Thyroid gland (tissue), 4 donors: ENCODE measurements at regions of chr15 and their contacts with region 1.

Region 1: DNA sequence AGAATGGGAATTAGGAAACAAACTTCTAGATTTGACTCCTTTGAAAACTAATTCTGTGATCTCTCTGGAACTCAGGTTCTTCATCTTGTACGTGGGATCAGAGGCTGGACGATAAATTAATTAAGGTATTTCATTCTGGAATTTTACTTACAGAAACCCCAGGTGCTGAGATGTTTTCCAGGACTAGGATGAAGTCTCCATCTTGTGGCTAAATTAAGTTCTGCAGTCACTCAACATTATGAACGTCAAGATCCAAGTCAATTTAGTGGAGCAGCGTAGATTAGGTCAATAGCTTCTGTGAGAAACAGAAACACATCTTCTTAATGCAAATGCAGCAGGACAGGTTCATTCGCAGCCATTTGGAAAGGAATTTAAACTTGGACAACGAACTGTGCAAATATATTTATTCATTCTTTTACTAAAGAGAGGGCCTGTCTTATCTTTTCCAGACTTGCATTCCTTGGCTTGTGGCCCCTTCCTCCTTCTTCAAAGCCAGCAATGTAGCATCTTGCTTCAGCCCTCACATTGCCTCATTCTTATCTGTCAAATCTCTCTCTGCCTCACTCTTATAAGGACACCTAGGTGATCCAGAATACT is 26.7 kb upstream of the TMC3 start:
- DNase-seq: no peak
- H3K4me3 ChIP-seq: no peak overlapping the region
- H3K27ac ChIP-seq: no peak overlapping the region
- H3K4me1 ChIP-seq: no peaks in the 10 kb centered on the region
- H3K27me3 ChIP-seq: no peaks in the 10 kb centered on the region
- CTCF ChIP-seq: peak; percentile 55 to 90 (median 82)
- POLR2A ChIP-seq: no peak

Region 2: DNA sequence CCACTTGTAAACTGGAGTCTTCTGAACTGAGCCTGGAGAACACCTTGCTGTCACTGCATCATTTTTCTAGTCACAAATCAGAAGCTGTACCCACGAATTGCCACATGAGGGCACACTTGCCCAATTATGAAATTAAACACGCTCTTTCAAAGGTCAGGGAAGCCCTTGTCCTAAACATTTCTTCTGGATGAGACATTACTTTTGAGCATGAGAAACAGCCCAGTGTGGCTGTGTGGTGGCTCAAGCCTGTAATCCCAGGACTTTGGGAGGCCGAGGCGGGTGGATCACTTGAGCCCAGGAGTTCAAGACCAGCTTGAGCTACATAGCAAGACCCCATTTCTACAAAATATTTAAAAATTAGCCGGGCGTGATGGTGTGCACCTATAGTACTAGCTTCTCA is 294.2 kb before region 1 on chr15:
- intact Hi-C with region 1: loop called (anchors 10 kb)
- DNase-seq: peak; percentile 49 to 58
- H3K4me3 ChIP-seq: no peak overlapping the region
- H3K27ac ChIP-seq: no peak overlapping the region
- H3K4me1 ChIP-seq: no peaks in the 10 kb centered on the region
- H3K27me3 ChIP-seq: no peaks in the 10 kb centered on the region
- CTCF ChIP-seq: peak; percentile 40 to 87 (median 78)
- POLR2A ChIP-seq: no peak

Region 3: GRCh38 chr15:81271761-81272644 is 128.7 kb before region 1 on chr15:
- intact Hi-C with region 1: loop called (anchors 2 kb)
- DNase-seq: no peak
- H3K4me3 ChIP-seq: no peak overlapping the region
- H3K27ac ChIP-seq: no peak overlapping the region
- H3K4me1 ChIP-seq: peaks cover 0 to 10% of the 10 kb centered on the region in 2 donors
- H3K27me3 ChIP-seq: no peaks in the 10 kb centered on the region
- CTCF ChIP-seq: no peak
- POLR2A ChIP-seq: no peak

Region 4: GRCh38 chr15:81323944-81324881 is 76.5 kb before region 1 on chr15 and contains the start of gene STARD5:
- intact Hi-C with region 1: no loop called
- DNase-seq: peak; percentile 99 to 100
- H3K4me3 ChIP-seq: peak within 1 kb of the TSS; percentile 8 to 75 (median 60)
- H3K27ac ChIP-seq: peak within 1 kb of the TSS in 2 of 3 donors; percentile 54 to 75
- H3K4me1 ChIP-seq: peaks cover 11 to 16% of the 10 kb centered on the region in 2 donors
- H3K27me3 ChIP-seq: no peaks in the 10 kb centered on the region
- CTCF ChIP-seq: no peak
- POLR2A ChIP-seq: peak; percentile 51 to 92
- total RNA-seq, gene STARD5: 1.5 to 11.3 (median 8.5) TPM

Region 5: DNA sequence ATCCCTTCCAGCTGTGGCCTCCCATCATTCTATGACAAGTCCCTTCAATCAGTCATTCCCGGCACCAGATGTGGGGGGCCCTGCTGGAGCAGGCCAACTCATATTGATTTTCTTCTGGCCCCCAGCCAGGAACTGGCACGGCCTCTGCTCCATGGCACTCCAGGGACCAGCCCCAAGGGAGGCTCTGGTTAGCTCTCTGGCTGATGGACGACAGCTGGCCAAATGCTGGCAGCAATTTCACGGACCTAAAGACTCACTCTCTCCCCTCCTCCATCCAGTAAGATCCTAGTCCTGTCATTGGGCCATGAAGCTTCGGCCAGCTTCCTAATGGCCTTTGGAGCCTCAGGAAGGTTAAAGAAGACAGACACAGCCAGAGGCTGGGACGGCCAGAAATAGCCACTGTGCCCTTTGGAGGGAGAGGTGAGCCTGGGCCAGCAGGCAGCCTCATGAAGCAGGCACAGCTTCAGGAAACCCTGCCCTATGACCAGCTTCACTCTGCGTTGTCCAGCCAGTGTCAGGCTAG is 514.1 kb after region 1 on chr15:
- intact Hi-C with region 1: no loop called
- DNase-seq: no peak
- H3K4me3 ChIP-seq: no peak overlapping the region
- H3K27ac ChIP-seq: no peak overlapping the region
- H3K4me1 ChIP-seq: no peaks in the 10 kb centered on the region
- H3K27me3 ChIP-seq: no peaks in the 10 kb centered on the region
- CTCF ChIP-seq: no peak
- POLR2A ChIP-seq: no peak